AG04449 (cell line): ENCODE measurements at regions of chr5 and their contacts with region 1.

Region 1: GRCh38 chr5:140372971-140373487 is 13.0 kb downstream of the SLC4A9 start:
- DNase-seq: no peak
- H3K4me3 ChIP-seq: no peak overlapping the region
- CTCF ChIP-seq: peak; percentile 76

Region 2: DNA sequence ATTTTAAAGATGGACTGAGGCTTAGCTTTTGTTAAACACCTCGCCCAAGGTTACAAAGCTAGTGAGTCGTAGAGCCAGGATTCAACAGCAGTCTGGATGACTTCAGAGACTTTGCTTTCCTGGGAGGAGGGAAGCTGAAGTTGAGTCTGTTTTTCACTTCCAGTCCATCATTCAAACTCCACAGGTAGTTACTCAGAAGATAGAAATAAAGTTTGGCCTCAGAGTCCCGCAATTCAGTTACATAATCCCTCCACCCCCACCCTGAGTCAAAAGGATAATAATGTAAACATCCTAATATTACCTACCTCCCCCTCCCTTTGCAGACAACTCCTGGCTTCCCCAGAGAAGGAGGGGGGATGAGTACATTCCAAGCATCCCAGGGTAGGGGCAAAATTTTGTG is 34.7 kb before region 1 on chr5:
- CTCF ChIA-PET with region 1: no interaction called
- POLR2A ChIA-PET with region 1: no interaction called
- DNase-seq: no peak
- H3K4me3 ChIP-seq: no peak overlapping the region
- CTCF ChIP-seq: no peak

Region 3: DNA sequence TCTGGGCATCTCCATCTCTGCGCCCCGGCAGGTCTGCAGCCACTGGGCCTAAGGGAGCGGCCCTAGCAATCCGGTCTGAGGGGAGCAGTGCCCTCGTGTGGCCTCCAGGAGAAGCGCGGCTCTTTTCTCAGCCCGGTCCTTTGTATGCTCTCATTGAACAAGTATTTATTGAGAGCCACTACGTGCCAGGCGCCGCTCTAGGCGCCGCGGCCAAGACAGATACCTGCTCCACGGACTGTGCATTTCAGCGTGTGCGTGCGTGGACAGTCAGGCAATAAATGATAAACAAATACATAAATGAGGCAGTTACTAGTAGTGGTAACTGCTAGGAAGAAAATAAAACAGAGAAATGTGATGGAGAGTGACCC is 15.3 kb before region 1 on chr5:
- CTCF ChIA-PET with region 1: interaction called, 43 read pairs
- POLR2A ChIA-PET with region 1: no interaction called
- DNase-seq: no peak
- H3K4me3 ChIP-seq: peak overlapping the region; percentile 32
- CTCF ChIP-seq: peak; percentile 95

Region 4: DNA sequence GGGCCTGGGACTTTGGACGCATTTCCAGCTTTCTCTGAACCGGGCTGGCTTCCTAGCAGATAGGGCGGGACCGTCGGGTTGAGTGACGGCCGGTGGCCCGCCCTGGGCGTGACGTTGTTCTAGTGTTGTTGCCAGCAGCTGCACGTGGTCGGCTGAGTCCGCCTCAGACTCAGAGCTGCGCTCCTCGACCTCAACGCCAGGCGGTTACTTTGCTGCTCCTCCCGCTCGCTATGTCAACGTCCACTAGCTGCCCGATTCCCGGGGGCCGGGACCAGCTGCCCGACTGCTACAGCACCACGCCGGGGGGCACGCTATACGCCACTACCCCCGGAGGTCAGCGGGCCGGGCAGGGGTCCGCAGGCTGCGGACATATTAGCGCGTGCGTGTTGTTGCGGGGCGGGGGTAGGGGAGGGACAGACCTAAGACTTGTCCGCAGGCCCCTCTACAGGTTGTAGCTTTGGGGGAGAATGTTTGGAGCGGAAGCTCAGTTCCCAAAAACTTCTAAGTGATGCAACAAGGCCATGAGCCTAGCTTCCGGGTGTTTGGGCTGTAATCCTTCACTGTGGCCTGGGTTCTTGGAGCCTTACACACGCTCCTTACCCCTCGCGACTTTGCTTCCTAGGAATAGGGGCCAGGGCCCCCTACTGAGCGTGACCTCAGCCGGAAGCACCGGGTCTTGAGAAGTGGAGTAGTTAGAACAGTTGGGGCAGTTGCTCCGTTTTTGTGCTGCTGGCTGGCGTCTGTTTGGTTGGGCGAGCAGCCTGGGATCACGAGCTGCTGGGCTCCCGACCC is 174.7 kb after region 1 on chr5 and contains the start of gene EIF4EBP3:
- CTCF ChIA-PET with region 1: interaction called, 10 read pairs
- POLR2A ChIA-PET with region 1: no interaction called
- DNase-seq: peak; percentile 77
- H3K4me3 ChIP-seq: peak within 1 kb of the TSS; percentile 49
- CTCF ChIP-seq: peak; percentile 70

Region 5: GRCh38 chr5:140639148-140639979 is 266.3 kb after region 1 on chr5 and contains the start of gene TMCO6:
- CTCF ChIA-PET with region 1: interaction called, 34 read pairs
- POLR2A ChIA-PET with region 1: no interaction called
- DNase-seq: peak; percentile 46
- H3K4me3 ChIP-seq: peak within 1 kb of the TSS; percentile 80
- CTCF ChIP-seq: peak; percentile 64

Region 6: GRCh38 chr5:140664359-140665119 is 291.5 kb after region 1 on chr5 and contains the start of gene WDR55:
- CTCF ChIA-PET with region 1: interaction called, 11 read pairs
- POLR2A ChIA-PET with region 1: no interaction called
- DNase-seq: peak; percentile 37
- H3K4me3 ChIP-seq: peak within 1 kb of the TSS; percentile 96
- CTCF ChIP-seq: no peak